Naive thymus-derived CD4-positive, alpha-beta T cell (primary cell): ENCODE measurements at regions of chr6 and their contacts with region 1.

Region 1: DNA sequence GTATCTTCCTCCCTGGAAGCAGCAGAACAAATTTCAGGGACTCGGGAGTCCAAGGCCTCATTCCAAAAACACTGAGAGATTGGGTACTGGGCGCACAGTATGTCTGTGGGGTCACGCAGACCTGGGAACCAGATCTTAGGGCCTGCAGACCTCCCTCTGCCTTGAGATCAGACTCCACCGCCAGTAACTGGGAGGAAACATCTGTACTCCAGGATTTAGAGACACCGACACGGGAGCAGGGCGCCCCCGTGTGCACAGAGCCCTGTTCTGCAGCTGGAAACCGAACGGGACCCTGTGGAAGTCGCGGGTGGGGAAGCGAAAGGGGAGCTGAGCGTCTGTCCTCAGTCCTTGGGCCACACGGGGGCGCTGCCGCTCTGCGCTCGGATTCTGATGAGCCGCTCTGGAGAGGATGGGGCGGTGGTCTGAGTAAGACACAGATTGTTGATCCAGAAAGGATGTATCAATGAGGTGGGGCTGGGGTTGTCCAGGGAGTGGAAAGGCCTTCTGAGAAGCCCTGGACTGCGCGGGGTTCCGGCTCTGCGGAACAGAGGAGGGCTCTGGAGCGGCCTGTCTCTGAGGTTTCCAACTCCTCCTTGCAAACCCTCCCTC is 35.7 kb upstream of the HLA-E start:
- DNase-seq: peak; percentile 73 to 90 (median 81)
- ATAC-seq: peak; percentile 86
- H3K4me3 ChIP-seq: peak overlapping the region; percentile 43
- H3K4me3 Mint-ChIP-seq: peak overlapping the region; percentile 49 to 84 (median 73)
- H3K27ac ChIP-seq: no peak overlapping the region
- H3K27ac Mint-ChIP-seq: no peak overlapping the region
- H3K4me1 ChIP-seq: peaks cover 37 to 44% of the 10 kb centered on the region in 2 donors
- H3K4me1 Mint-ChIP-seq: peaks cover 23 to 56% (median 51%) of the 10 kb centered on the region in 7 donors
- H3K27me3 ChIP-seq: peaks cover 22 to 29% of the 10 kb centered on the region in 2 donors
- H3K27me3 Mint-ChIP-seq: peaks cover 67 to 91% (median 82%) of the 10 kb centered on the region in 5 donors

Region 2: GRCh38 chr6:30357678-30358540 is 95.7 kb before region 1 on chr6:
- CTCF ChIA-PET with region 1: interaction called, 3 read pairs
- POLR2A ChIA-PET with region 1: no interaction called
- intact Hi-C with region 1: loop called (anchors 5 kb)
- DNase-seq: peak; percentile 19 to 62 (median 51)
- ATAC-seq: peak; percentile 83
- H3K4me3 ChIP-seq: peak overlapping the region; percentile 59
- H3K4me3 Mint-ChIP-seq: peak overlapping the region; percentile 75 to 89 (median 86)
- H3K27ac ChIP-seq: no peak overlapping the region
- H3K27ac Mint-ChIP-seq: no peak overlapping the region
- H3K4me1 ChIP-seq: peaks cover 0 to 5% of the 10 kb centered on the region in 2 donors
- H3K4me1 Mint-ChIP-seq: peaks cover 0 to 10% (median 6%) of the 10 kb centered on the region in 7 donors
- H3K27me3 ChIP-seq: peaks cover 10 to 11% of the 10 kb centered on the region in 2 donors
- H3K27me3 Mint-ChIP-seq: peaks cover 37 to 84% (median 56%) of the 10 kb centered on the region in 5 donors

Region 3: DNA sequence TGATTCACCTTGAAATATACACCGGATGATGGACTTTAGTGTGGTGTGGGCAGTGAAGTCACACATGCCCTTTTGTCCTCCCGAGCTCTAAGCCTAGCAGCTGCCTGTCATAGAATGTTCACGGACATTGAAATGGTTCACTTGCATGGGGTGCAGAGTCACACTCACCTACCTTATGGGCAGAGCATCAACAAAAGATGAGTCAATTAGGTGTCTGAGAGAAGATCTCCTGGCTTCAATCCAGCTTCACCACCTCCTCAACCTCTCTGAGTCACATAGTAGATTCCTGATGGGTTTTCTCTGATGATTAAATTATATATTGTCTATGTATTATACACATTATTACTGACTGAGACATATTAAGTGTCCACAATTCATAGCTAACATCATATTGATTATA is 12.4 kb before region 1 on chr6:
- CTCF ChIA-PET with region 1: interaction called, 9 read pairs
- POLR2A ChIA-PET with region 1: interaction called, 13 read pairs
- intact Hi-C with region 1: no loop called
- DNase-seq: no peak
- ATAC-seq: no peak
- H3K4me3 ChIP-seq: no peak overlapping the region
- H3K4me3 Mint-ChIP-seq: no peak overlapping the region
- H3K27ac ChIP-seq: no peak overlapping the region
- H3K27ac Mint-ChIP-seq: no peak overlapping the region
- H3K4me1 ChIP-seq: no peaks in the 10 kb centered on the region
- H3K4me1 Mint-ChIP-seq: peaks cover 0 to 6% (median 4%) of the 10 kb centered on the region in 7 donors
- H3K27me3 ChIP-seq: peaks cover 13 to 16% of the 10 kb centered on the region in 2 donors
- H3K27me3 Mint-ChIP-seq: peaks cover 62 to 85% (median 70%) of the 10 kb centered on the region in 5 donors

Region 4: DNA sequence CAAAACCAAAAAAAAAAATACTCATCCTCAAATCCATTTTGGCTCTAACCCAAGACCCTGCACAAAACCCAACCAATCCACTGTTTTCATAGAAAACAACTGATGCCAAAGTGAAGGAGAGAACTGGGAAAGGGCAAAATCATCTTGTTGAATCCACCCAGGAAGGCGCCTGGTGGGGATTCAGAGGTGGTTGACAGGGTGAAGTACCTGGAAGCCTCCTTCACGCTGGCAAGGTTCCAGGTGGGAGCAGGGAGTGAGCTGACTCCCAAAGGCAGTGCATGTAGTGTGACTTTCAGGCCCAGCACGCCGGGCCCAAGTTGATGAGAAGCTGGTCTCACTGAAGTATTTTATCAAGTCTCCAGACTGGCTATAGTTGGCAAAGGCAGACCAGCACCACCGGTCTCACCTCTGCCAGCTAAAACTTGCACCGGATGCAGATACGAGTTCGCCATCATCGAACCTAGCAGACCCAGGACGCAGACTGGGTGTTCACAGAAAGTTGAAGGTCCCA is 146.9 kb after region 1 on chr6:
- CTCF ChIA-PET with region 1: interaction called, 4 read pairs
- POLR2A ChIA-PET with region 1: no interaction called
- intact Hi-C with region 1: loop called in 1 of 2 experiments (anchors 1 kb)
- DNase-seq: no peak
- ATAC-seq: no peak
- H3K4me3 ChIP-seq: no peak overlapping the region
- H3K4me3 Mint-ChIP-seq: no peak overlapping the region
- H3K27ac ChIP-seq: peak overlapping the region; percentile 47
- H3K27ac Mint-ChIP-seq: peak overlapping the region in 7 of 9 donors; percentile 58 to 85 (median 79)
- H3K4me1 ChIP-seq: peaks cover 3 to 5% of the 10 kb centered on the region in 2 donors
- H3K4me1 Mint-ChIP-seq: peaks cover 16 to 35% (median 25%) of the 10 kb centered on the region in 7 donors
- H3K27me3 ChIP-seq: no peaks in the 10 kb centered on the region
- H3K27me3 Mint-ChIP-seq: no peaks in the 10 kb centered on the region

Region 5: DNA sequence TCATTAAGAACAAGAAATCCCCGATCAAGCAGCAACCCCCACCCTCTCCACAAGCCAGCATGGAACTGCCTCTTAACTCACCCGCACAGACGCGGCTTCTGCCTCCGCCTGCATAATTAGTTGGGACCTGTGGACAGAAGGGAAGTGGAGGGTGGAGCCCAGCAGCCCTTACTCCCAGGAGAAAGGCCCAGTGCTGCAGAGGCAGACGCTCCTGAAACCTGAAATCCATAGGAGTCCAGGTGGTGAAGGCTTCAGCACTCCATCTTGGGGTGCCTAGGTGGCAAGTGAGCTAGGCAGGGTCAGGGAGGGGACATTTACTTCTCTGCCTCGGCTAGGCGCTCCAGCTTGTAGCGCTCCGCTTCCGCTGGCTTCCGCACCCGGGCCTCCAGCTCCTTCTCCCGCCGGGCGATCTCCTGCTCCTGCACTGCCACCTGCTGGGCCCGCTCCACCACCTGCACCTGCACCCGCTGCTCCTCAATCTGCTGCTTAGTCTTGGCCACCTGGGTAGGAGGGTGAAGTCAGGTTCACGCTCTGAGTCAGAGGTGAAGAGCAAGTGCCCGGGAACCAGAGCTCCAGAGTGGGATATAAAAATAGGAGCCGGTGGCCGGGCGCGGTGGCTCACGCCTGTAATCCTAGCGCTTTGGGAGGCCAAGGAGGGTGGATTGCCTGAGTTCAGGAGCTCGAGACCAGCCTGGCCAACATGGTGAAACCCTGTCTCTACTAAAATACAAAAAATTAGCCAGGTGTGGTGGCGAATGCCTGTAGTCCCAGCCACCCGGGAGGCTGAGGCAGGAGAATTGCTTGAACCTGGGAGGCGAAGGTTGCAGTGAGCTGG is 277.2 kb after region 1 on chr6:
- CTCF ChIA-PET with region 1: interaction called, 3 read pairs
- POLR2A ChIA-PET with region 1: no interaction called
- intact Hi-C with region 1: loop called (anchors 10 kb)
- DNase-seq: peak; percentile 62 to 86 (median 81)
- ATAC-seq: peak; percentile 97
- H3K4me3 ChIP-seq: no peak overlapping the region
- H3K4me3 Mint-ChIP-seq: peak overlapping the region in 9 of 10 donors; percentile 27 to 69 (median 55)
- H3K27ac ChIP-seq: peak overlapping the region; percentile 52
- H3K27ac Mint-ChIP-seq: peak overlapping the region in 7 of 9 donors; percentile 29 to 79 (median 73)
- H3K4me1 ChIP-seq: peaks cover 14 to 30% of the 10 kb centered on the region in 2 donors
- H3K4me1 Mint-ChIP-seq: peaks cover 27 to 54% (median 42%) of the 10 kb centered on the region in 7 donors
- H3K27me3 ChIP-seq: no peaks in the 10 kb centered on the region
- H3K27me3 Mint-ChIP-seq: no peaks in the 10 kb centered on the region